Right ventricle myocardium inferior (tissue), 1 donor: ENCODE measurements at regions of chr14 and their contacts with region 1.

Region 1: DNA sequence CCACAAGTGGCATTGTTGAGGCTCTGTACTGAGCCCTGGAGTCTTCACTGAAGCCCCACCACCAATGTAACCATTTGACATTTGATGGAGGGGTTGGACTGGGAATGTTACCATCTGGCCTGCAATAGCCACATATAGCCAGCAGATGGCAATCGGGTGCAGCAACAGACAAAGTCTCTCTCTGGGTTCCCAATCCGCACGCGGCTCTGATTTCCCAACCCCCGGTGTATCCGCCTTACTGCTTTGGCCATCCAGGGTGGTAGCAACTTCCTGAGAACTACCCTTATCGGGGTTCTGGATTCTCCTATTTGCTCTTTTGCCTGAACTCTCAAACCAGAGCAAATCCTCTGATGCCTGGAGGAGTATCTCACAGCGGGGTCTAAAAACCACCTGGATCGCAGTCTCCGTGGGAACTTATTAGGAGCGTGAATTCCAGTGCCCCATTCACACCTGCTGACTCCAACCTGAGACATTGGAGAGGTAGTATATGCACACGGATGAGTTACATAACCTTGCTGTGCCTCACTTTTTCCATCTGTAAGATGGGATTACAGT is 14.2 kb downstream of the VRTN start:
- DNase-seq: peak; percentile 84
- ATAC-seq: peak; percentile 79

Region 2: DNA sequence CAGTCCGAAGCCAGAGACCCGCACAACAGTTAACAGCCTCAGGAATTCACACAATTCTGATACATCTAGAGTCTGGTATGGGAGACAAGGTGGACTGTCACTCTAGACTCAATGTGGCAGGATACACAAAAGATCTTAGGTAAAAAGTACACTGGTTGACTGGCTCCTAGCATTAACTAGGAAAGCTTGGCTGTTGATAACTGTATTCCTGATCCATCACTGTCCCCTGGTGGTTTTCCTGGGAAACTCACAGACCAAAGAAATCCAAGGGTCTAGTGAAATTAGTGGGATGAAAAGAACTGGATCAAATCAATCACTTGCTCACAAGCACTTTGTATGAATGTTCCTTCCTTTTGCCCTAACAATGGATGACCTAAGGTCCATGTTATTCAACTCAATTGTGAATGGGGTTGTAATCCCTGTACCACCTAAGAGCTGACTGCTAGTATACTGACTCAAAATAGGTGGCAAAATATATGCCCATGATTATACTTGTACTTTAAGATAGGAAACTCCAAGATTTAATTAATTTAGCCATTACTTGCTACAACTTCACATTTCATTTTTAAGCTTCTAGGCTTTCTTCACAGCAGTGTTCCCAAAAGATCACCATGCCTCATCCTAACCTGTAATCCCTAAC is 116.7 kb after region 1 on chr14:
- intact Hi-C with region 1: loop called (anchors 2 kb)
- DNase-seq: no peak
- ATAC-seq: no peak

Region 3: GRCh38 chr14:74493343-74494261 is 131.2 kb after region 1 on chr14 and contains the start of gene ISCA2:
- intact Hi-C with region 1: loop called (anchors 5 kb)
- DNase-seq: peak; percentile 100
- ATAC-seq: peak; percentile 98
- total RNA-seq, gene ISCA2: 38.4 TPM

Region 4: GRCh38 chr14:74793506-74794168 is 431.2 kb after region 1 on chr14:
- intact Hi-C with region 1: loop called (anchors 5 kb)
- DNase-seq: no peak
- ATAC-seq: no peak